ENCODE measurements at regions of chr11 and their contacts with region 1.

Region 1: DNA sequence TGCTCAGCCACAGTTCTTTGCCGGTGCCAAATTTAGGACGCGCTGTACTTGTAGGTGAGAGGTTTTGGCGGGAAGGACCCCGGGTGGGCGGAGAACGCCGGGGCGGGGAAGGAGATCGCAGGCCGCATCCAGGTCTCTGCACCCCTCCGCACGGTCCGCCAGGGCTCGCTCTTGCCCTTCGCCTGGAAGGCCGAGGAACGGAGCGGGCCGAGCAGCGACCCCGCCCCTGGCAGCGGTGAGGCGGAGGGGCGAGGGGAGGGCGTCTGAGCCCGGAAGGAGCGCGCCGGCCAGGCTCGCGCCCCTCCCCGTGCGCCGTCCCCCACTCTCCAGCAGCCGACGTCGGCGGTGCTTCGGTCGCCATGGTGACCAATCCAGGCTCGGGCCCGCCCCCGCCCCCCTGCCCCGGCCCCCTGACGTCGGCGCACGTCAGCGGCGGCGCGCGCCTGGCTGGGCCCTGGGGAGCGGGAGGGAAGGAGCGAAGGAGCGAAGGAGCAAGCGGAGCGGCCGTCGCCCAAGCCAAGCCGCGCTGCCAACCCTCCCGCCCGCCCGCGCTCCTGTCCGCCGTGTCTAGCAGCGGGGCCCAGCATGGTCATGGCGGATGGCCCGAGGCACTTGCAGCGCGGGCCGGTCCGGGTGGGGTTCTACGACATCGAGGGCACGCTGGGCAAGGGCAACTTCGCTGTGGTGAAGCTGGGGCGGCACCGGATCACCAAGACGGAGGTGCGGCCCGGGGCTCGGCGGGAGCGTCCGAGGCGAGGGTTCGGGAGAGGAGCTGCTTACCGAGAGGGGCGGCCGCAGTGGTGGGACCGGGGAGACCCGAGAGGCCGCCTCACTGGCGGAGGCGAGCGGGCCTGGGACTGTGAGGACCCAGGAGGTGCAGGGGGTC is at the start of gene SIK2:
- DNase-seq: peak; percentile 98
- ATAC-seq: peak; percentile 78
- H3K4me3 ChIP-seq: peak within 1 kb of the TSS; percentile 90
- H3K27ac ChIP-seq: peak within 1 kb of the TSS; percentile 61
- H3K4me1 ChIP-seq: peaks cover 19% of the 10 kb centered on the region
- H3K27me3 ChIP-seq: no peaks in the 10 kb centered on the region
- CTCF ChIP-seq: peak; percentile 88
- total RNA-seq, gene SIK2: 8.6 and 9.0 TPM in 2 replicates

Region 2: GRCh38 chr11:111299101-111300026 is 302.9 kb before region 1 on chr11:
- CTCF ChIA-PET with region 1: no interaction called
- POLR2A ChIA-PET with region 1: no interaction called
- intact Hi-C with region 1: no loop called
- DNase-seq: peak; percentile 43
- ATAC-seq: peak; percentile 70
- H3K4me3 ChIP-seq: peak overlapping the region; percentile 66
- H3K27ac ChIP-seq: no peak overlapping the region
- H3K4me1 ChIP-seq: no peaks in the 10 kb centered on the region; the same call in 1 of the 2 replicates
- H3K27me3 ChIP-seq: peaks cover 60% of the 10 kb centered on the region
- CTCF ChIP-seq: peak; percentile 57

Region 3: GRCh38 chr11:111540114-111540936 is 61.9 kb before region 1 on chr11 and contains the start of gene LAYN:
- CTCF ChIA-PET with region 1: no interaction called
- POLR2A ChIA-PET with region 1: no interaction called
- intact Hi-C with region 1: no loop called
- DNase-seq: no peak
- ATAC-seq: no peak
- H3K4me3 ChIP-seq: no peak within 1 kb of the TSS
- H3K27ac ChIP-seq: no peak within 1 kb of the TSS
- H3K4me1 ChIP-seq: peaks cover 31% of the 10 kb centered on the region
- H3K27me3 ChIP-seq: no peaks in the 10 kb centered on the region
- CTCF ChIP-seq: no peak
- total RNA-seq, gene LAYN: 0.47 TPM in 1 of 2 replicates, not detected in the other

Region 4: DNA sequence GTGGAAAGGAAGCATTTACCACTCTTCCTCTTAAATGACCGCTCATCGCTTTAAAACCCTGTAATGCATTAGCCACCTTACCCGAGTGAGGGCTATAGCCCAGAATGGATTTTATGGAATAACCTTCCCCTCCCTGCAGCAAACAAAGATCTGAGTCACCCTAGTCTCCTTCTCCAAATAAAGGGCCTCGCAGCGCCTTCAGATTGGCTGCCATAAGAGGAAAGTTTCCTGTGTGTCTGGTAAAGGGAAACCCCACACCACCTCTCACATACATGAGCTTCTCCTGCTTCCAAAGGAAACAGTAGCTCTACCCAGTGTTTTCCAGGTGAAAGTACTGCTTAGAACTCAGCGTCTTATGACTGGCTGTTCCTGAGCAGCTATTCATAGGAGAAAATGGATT is 116.2 kb after region 1 on chr11:
- CTCF ChIA-PET with region 1: interaction called, 3 read pairs
- POLR2A ChIA-PET with region 1: interaction called, 3 read pairs
- intact Hi-C with region 1: loop called (anchors 1 kb)
- DNase-seq: peak; percentile 98
- ATAC-seq: peak; percentile 96
- H3K4me3 ChIP-seq: peak overlapping the region; percentile 20
- H3K27ac ChIP-seq: peak overlapping the region; percentile 81
- H3K4me1 ChIP-seq: peaks cover 21% of the 10 kb centered on the region
- H3K27me3 ChIP-seq: no peaks in the 10 kb centered on the region
- CTCF ChIP-seq: no peak; the same call in 1 of the 2 replicates

Region 5: GRCh38 chr11:111735262-111736116 is 133.3 kb after region 1 on chr11:
- CTCF ChIA-PET with region 1: no interaction called
- POLR2A ChIA-PET with region 1: no interaction called
- intact Hi-C with region 1: loop called (anchors 1 kb)
- DNase-seq: peak; percentile 99
- ATAC-seq: peak; percentile 73
- H3K4me3 ChIP-seq: peak overlapping the region; percentile 55
- H3K27ac ChIP-seq: peak overlapping the region; percentile 96
- H3K4me1 ChIP-seq: peaks cover 39% of the 10 kb centered on the region
- H3K27me3 ChIP-seq: no peaks in the 10 kb centered on the region
- CTCF ChIP-seq: peak; percentile 51; the same call in 1 of the 2 replicates

Region 6: GRCh38 chr11:111766093-111766833 is 164.0 kb after region 1 on chr11 and contains the start of gene PPP2R1B:
- CTCF ChIA-PET with region 1: interaction called, 3 read pairs
- POLR2A ChIA-PET with region 1: interaction called, 3 read pairs
- intact Hi-C with region 1: loop called (anchors 1 kb)
- DNase-seq: peak; percentile 83
- ATAC-seq: peak; percentile 82
- H3K4me3 ChIP-seq: peak within 1 kb of the TSS; percentile 74
- H3K27ac ChIP-seq: peak within 1 kb of the TSS; percentile 74
- H3K4me1 ChIP-seq: peaks cover 25% of the 10 kb centered on the region
- H3K27me3 ChIP-seq: no peaks in the 10 kb centered on the region
- CTCF ChIP-seq: no peak
- total RNA-seq, gene PPP2R1B: 31.3 and 41.5 TPM in 2 replicates

Region 7: DNA sequence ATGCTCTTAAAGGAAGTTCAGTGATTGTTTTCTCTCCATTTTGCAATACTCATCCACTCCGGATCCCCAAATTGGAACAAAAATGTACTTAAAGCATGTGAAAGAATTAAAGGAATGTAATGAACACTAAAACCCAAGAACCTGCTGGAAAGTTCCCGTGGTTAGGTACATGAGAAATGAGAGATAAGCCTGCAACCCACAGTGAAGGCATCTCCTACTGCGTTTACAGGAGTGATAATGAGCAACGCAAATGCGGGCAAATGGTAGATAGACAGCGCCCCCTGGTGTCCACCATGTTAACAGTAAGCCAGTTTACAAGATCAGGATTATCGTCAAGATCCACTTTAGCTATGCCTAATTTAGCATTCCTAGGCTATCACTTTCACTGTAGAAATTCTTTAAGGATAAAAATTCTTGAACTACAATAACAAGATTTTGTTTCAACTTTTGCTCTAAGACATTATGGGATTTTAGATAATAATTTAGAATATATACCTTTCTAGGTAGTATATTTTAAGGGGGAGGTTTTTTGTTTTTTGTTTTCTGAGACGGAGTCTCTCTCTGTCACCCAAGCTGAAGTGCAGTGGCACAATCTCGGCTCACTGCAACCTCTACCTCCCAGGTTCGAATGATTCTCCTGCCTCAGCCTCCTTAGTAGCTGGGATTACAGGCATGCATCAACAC is 239.3 kb after region 1 on chr11:
- CTCF ChIA-PET with region 1: interaction called, 5 read pairs
- POLR2A ChIA-PET with region 1: interaction called, 7 read pairs
- intact Hi-C with region 1: loop called (anchors 1 kb)
- DNase-seq: peak; percentile 92
- ATAC-seq: peak; percentile 69
- H3K4me3 ChIP-seq: no peak overlapping the region
- H3K27ac ChIP-seq: no peak overlapping the region
- H3K4me1 ChIP-seq: peaks cover 30% of the 10 kb centered on the region
- H3K27me3 ChIP-seq: no peaks in the 10 kb centered on the region
- CTCF ChIP-seq: peak; percentile 98